ENCODE measurements at regions of chr9 and their contacts with region 1.

Region 1: DNA sequence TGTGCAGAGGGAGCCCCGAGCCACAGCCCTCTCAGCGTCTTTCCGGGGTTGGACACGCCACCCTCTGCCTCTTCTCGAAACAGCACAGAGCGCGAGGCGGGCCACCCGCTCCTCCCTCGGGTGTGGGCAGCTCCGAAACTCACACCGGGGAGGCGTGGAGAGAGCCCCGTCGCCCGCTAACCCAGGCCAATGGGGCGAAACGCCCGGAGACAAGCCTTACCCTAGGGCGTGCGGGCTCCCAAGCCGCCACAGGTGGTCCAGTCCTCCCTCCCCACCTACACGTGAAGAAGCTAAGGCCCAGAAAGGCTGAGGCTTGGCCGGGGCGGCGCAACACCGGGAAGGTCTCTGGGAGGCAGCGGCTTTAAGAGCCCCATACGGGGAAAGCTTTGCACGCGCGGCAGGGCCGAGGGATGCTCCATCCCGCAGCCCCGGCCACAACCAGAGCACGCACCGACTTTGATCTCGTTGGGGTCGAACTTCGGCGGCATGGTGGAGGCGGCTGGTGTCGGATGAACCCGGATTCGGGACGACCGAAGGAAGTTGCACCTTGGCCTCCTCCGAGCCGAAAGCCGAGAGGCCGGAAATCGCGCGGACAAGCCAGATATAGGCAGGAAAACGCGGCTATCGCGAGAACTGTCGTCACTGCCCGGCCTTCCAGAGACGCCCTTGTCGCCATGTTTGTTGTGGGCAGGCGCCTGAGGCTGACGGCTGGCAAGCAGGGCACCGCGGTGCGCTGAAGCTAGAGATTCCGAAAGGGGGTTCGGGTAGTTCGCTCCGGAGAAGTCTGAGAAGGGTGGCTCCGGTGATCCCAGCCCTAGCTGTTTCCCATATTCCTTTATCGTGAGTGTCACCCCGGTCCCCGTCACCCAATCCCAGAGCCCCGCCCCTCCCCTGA is at the starts of genes LRSAM1 and RPL12:
- DNase-seq: peak; percentile 97 to 100 (median 99)
- ATAC-seq: peak; percentile 84
- H3K4me3 ChIP-seq: peak within 1 kb of the TSS; percentile 89
- H3K4me3 Mint-ChIP-seq: peak within 1 kb of the TSS; percentile 99
- H3K27ac ChIP-seq: peak within 1 kb of the TSS; percentile 74 to 92
- H3K27ac Mint-ChIP-seq: peak within 1 kb of the TSS; percentile 99
- H3K4me1 ChIP-seq: peaks cover 41% of the 10 kb centered on the region
- H3K4me1 Mint-ChIP-seq: peaks cover 40% of the 10 kb centered on the region
- H3K27me3 ChIP-seq: no peaks in the 10 kb centered on the region
- H3K27me3 Mint-ChIP-seq: no peaks in the 10 kb centered on the region
- CTCF ChIP-seq: no peak
- total RNA-seq, gene LRSAM1: 11.4 to 16.0 TPM
- total RNA-seq, gene RPL12: 1,884 to 1,993 TPM

Region 2: GRCh38 chr9:127214421-127215267 is 236.4 kb before region 1 on chr9:
- CTCF ChIA-PET with region 1: interaction called, 3 read pairs
- POLR2A ChIA-PET with region 1: no interaction called
- intact Hi-C with region 1: loop called (anchors 2 to 10 kb)
- DNase-seq: peak; percentile 40 to 78 (median 54)
- ATAC-seq: peak; percentile 92
- H3K4me3 ChIP-seq: no peak overlapping the region
- H3K4me3 Mint-ChIP-seq: no peak overlapping the region
- H3K27ac ChIP-seq: no peak overlapping the region
- H3K27ac Mint-ChIP-seq: no peak overlapping the region
- H3K4me1 ChIP-seq: no peaks in the 10 kb centered on the region
- H3K4me1 Mint-ChIP-seq: peaks cover 5% of the 10 kb centered on the region
- H3K27me3 ChIP-seq: no peaks in the 10 kb centered on the region
- H3K27me3 Mint-ChIP-seq: peaks cover 16% of the 10 kb centered on the region
- CTCF ChIP-seq: peak; percentile 83

Region 3: DNA sequence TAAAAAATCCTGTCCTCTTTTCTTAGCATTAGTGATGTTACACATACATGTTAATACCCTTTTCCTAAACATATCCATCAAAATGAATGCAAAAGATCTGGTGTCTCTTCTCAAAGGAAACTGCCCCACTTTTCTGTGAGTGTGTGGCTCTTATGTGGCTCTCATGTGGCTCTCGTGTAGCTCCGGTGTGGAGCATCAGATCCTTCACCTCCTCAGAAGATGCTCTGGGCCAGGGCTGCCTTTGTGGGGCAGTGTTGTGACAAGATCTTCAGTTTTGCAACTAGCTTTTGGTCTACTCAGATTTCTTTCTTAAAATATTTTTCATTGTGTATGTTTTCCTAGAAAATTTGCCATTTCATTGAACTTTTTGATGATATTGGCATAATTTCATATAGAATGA is 167.2 kb before region 1 on chr9:
- CTCF ChIA-PET with region 1: no interaction called
- POLR2A ChIA-PET with region 1: interaction called, 3 read pairs
- intact Hi-C with region 1: loop called in 1 of 2 experiments (anchors 1 kb)
- DNase-seq: peak in 8 of 14 experiments; percentile 1 to 49 (median 21)
- ATAC-seq: no peak
- H3K4me3 ChIP-seq: no peak overlapping the region
- H3K4me3 Mint-ChIP-seq: no peak overlapping the region
- H3K27ac ChIP-seq: no peak overlapping the region
- H3K27ac Mint-ChIP-seq: no peak overlapping the region
- H3K4me1 ChIP-seq: no peaks in the 10 kb centered on the region
- H3K4me1 Mint-ChIP-seq: no peaks in the 10 kb centered on the region
- H3K27me3 ChIP-seq: peaks cover 0 to 12% of the 10 kb centered on the region in 2 experiments
- H3K27me3 Mint-ChIP-seq: peaks cover 56% of the 10 kb centered on the region
- CTCF ChIP-seq: no peak

Region 4: DNA sequence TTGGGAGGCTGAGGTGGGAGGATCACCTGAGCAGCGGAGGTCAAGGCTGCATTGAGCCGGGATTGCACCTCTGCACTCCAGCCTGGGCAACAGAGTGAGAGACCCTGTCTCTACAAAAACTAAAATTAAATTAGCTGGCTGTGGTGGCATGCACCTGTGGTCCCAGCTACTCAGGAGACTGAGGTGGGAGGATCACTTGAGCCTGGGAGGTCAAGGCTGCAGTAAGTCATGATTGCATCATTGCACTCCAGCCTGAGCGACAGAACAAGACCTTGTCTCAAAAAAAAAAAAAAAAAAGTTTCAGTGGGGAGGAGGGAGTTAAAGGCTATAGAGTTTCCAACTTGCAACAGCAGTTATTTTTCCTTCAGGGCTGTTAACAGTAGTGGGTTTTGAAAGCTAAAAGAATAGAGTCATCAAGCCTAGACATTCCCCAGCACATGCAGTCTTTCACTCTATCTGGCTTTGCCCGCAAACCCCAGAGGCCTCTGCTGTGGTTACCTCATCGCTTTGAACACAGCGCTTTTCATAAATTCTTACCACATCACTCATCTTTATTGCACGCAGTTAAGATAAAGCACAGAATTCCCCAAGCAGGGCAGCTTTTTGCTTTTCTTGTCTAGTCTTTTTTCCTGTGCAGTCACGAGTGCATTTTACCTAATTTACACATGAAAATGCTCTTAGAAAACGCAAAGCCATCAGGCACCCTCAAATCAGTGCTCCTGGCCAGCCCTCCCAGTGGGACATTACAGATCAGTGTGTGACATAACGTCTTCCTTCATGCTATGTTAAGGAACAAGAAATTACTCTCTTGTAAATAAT is 62.8 kb before region 1 on chr9:
- CTCF ChIA-PET with region 1: interaction called, 4 read pairs
- POLR2A ChIA-PET with region 1: interaction called, 19 read pairs
- intact Hi-C with region 1: loop called (anchors 2 to 5 kb)
- DNase-seq: peak; percentile 75 to 96 (median 82)
- ATAC-seq: peak; percentile 96
- H3K4me3 ChIP-seq: no peak overlapping the region
- H3K4me3 Mint-ChIP-seq: peak overlapping the region; percentile 42
- H3K27ac ChIP-seq: no peak overlapping the region
- H3K27ac Mint-ChIP-seq: peak overlapping the region; percentile 37
- H3K4me1 ChIP-seq: peaks cover 23% of the 10 kb centered on the region
- H3K4me1 Mint-ChIP-seq: peaks cover 26% of the 10 kb centered on the region
- H3K27me3 ChIP-seq: peaks cover 69 to 75% of the 10 kb centered on the region in 2 experiments
- H3K27me3 Mint-ChIP-seq: peaks cover 86% of the 10 kb centered on the region
- CTCF ChIP-seq: no peak

Region 5: GRCh38 chr9:127423934-127424675 is 27.0 kb before region 1 on chr9 and contains the start of gene ZNF79:
- CTCF ChIA-PET with region 1: interaction called, 8 read pairs
- POLR2A ChIA-PET with region 1: interaction called, 31 read pairs
- intact Hi-C with region 1: loop called (anchors 1 to 2 kb)
- DNase-seq: peak; percentile 80 to 94 (median 86)
- ATAC-seq: peak; percentile 87
- H3K4me3 ChIP-seq: peak within 1 kb of the TSS; percentile 93
- H3K4me3 Mint-ChIP-seq: peak within 1 kb of the TSS; percentile 99
- H3K27ac ChIP-seq: peak within 1 kb of the TSS; percentile 63 to 78
- H3K27ac Mint-ChIP-seq: peak within 1 kb of the TSS; percentile 90
- H3K4me1 ChIP-seq: peaks cover 32% of the 10 kb centered on the region
- H3K4me1 Mint-ChIP-seq: peaks cover 45% of the 10 kb centered on the region
- H3K27me3 ChIP-seq: no peaks in the 10 kb centered on the region
- H3K27me3 Mint-ChIP-seq: no peaks in the 10 kb centered on the region
- CTCF ChIP-seq: no peak
- total RNA-seq, gene ZNF79: 4.3 to 4.9 TPM

Region 6: DNA sequence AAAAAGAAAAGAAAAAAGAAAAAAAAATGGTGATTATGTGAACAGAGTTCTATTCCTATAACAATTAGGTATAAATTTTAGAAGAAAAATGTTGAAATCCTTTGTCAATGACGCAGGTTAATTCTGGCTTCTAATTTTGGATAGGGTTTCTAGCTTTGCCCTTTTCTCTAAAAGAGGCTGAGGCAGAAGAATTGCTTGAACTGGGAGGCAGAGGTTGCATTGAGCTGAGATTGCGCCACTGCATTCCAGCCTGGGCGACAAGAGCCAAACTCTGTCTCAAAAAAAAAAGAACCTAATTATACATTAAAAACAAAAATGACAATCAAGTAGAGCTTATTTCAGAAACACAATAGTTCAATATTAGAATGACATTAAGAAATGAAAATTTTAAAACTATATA is 163.9 kb after region 1 on chr9:
- CTCF ChIA-PET with region 1: no interaction called
- POLR2A ChIA-PET with region 1: no interaction called
- intact Hi-C with region 1: no loop called
- DNase-seq: no peak
- ATAC-seq: no peak
- H3K4me3 ChIP-seq: no peak overlapping the region
- H3K4me3 Mint-ChIP-seq: no peak overlapping the region
- H3K27ac ChIP-seq: no peak overlapping the region
- H3K27ac Mint-ChIP-seq: no peak overlapping the region
- H3K4me1 ChIP-seq: peaks cover 20% of the 10 kb centered on the region
- H3K4me1 Mint-ChIP-seq: peaks cover 17% of the 10 kb centered on the region
- H3K27me3 ChIP-seq: peaks cover 0 to 2% of the 10 kb centered on the region in 2 experiments
- H3K27me3 Mint-ChIP-seq: peaks cover 27% of the 10 kb centered on the region
- CTCF ChIP-seq: no peak

Region 7: DNA sequence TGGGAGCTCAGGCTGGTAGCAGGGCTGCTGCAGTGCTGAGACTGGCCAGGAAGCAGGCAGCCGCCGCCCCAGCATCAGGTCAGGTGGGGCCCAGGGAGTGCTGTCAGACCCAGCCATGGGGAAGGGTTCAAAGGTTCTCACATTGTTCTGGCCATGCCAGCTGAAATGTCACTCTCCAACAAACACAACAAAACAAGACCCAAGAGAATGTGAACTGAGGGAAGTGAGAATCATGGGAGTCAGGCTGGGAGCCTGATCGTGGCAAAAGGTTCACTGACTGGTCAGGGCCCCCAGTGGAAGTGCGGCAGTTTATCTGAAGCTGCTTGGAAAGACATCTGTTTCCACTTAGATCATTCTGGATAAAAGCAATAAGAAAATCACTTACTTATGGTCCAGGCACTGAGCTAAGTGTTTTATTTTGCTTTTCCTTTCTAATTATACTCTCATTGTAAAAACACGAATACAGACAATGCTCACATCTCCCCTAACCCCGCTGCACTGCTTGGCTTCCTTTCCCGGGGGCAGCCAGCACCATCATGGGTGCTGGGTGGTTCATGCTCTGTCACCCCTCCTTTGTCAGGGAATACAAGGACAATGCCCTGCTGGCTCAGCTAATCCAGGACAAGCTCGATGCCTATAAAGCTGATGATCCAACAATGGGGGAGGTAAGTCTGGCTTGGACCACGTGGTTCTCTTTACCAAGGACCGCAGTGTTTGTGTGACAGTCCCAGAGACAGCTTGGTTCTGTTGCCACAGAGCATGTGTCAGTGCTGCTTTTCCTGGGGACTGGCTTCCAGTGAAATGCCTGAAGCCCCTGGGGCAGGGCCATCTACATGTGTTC is 213.8 kb after region 1 on chr9:
- CTCF ChIA-PET with region 1: no interaction called
- POLR2A ChIA-PET with region 1: no interaction called
- intact Hi-C with region 1: no loop called
- DNase-seq: no peak
- ATAC-seq: no peak
- H3K4me3 ChIP-seq: no peak overlapping the region
- H3K4me3 Mint-ChIP-seq: no peak overlapping the region
- H3K27ac ChIP-seq: no peak overlapping the region
- H3K27ac Mint-ChIP-seq: no peak overlapping the region
- H3K4me1 ChIP-seq: no peaks in the 10 kb centered on the region
- H3K4me1 Mint-ChIP-seq: no peaks in the 10 kb centered on the region
- H3K27me3 ChIP-seq: no peaks in the 10 kb centered on the region
- H3K27me3 Mint-ChIP-seq: peaks cover 4% of the 10 kb centered on the region
- CTCF ChIP-seq: no peak

Measured in CD4-positive, alpha-beta T cell (primary cell).